Gastrocnemius medialis (tissue), 4 donors: ENCODE measurements at regions of chr12 and their contacts with region 1.

Region 1: DNA sequence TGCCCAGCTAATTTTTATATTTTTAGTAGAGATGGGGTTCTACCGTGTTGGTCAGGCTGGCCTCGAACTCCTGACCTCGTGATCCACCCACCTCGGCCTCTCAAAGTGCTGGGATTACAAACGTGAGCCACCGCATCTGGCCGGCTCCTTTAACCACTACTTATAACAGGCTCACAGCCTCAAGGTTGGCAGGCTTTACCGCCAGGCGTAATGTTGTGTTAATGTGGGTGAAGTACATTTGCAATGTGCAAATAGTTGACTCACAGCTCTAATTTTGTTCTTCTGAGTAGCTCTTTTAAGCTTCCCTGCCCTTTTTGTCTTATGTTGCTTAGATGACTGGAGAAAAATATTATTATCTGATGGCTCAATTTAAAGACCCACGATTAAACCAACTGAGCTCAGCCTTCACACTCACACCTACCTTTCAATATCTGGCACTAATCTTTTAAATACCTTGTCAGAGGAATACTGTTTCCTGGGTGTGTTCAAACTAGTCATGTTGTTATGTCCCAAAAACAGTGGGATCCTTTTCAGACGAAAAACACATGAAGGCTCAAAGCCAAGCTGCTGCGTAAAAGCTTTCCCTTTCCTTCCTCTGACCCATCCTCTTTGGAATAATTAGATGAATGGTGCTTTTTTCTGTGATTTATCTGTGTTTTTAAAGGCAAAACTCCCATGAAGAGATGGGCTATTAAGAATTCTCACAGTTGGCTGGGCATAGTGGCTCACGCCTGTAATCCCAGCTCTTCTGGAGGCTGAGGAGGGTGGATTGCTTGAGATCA is 57.2 kb upstream of the USP44 start:
- DNase-seq: peak; percentile 13 to 75
- ATAC-seq: peak; percentile 73 to 91
- H3K4me3 ChIP-seq: no peak overlapping the region
- H3K27ac ChIP-seq: peak overlapping the region; percentile 47 to 66 (median 58)
- H3K4me1 ChIP-seq: no peaks in the 10 kb centered on the region
- H3K27me3 ChIP-seq: no peaks in the 10 kb centered on the region
- CTCF ChIP-seq: no peak
- POLR2A ChIP-seq: no peak

Region 2: GRCh38 chr12:95789126-95790032 is 180.9 kb after region 1 on chr12:
- in situ Hi-C with region 1: no loop called
- intact Hi-C with region 1: loop called (anchors 10 kb)
- DNase-seq: no peak
- ATAC-seq: no peak
- H3K4me3 ChIP-seq: peak overlapping the region; percentile 65 to 75 (median 67)
- H3K27ac ChIP-seq: peak overlapping the region; percentile 71 to 76 (median 72)
- H3K4me1 ChIP-seq: peaks cover 4 to 14% of the 10 kb centered on the region in 2 donors
- H3K27me3 ChIP-seq: peaks cover 0 to 27% (median 8%) of the 10 kb centered on the region in 3 donors
- CTCF ChIP-seq: no peak
- POLR2A ChIP-seq: no peak